ENCODE measurements at regions of chr5 and their contacts with region 1.

Region 1: GRCh38 chr5:96868603-96869371 is 7.5 kb upstream of the ERAP2 start:
- DNase-seq: peak in 1 of 2 donors; percentile 5
- H3K4me3 ChIP-seq: no peak overlapping the region
- H3K27ac ChIP-seq: no peak overlapping the region
- H3K4me1 ChIP-seq: no peaks in the 10 kb centered on the region
- H3K27me3 ChIP-seq: no peaks in the 10 kb centered on the region
- CTCF ChIP-seq: peak; percentile 82 to 97 (median 90)
- POLR2A ChIP-seq: no peak

Region 2: DNA sequence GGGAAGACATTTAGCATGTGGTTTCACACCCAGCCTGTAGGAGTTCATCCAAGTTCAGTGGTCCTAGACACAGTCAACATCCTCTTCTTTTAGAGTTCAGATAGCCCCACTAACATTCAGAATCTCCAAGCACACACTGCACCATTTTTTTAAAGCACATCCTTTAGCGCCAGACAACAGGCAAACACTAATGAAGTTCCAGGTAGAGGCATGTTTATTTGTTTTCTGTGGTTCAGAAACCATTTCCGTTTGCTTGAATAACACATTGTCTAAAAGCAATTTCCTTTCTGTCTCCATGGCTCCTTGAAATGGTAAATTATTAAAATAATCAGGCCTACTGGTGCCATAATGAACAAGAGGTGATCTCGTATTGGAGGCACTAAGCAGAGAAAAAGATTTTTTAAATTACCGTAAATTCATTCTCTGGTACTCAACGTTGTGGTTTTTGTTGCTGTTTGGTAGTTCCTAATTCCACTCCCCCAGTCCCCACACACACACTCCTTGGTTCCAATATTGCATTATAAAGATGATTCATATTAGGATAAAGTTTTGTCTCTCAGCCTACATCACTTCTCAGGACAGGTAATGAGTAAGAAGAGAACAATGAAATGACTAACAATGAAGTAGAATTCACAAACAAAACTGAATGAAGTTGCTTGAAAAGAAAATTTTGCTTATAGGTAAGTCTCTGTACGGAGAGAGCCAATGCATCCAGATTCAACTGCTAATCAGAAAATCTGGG is 588.8 kb before region 1 on chr5:
- intact Hi-C with region 1: no loop called
- DNase-seq: no peak
- H3K4me3 ChIP-seq: no peak overlapping the region
- H3K27ac ChIP-seq: no peak overlapping the region
- H3K4me1 ChIP-seq: no peaks in the 10 kb centered on the region
- H3K27me3 ChIP-seq: no peaks in the 10 kb centered on the region
- CTCF ChIP-seq: no peak
- POLR2A ChIP-seq: no peak

Region 3: GRCh38 chr5:96353220-96353619 is 515.6 kb before region 1 on chr5:
- intact Hi-C with region 1: no loop called
- DNase-seq: no peak
- H3K4me3 ChIP-seq: no peak overlapping the region
- H3K27ac ChIP-seq: no peak overlapping the region
- H3K4me1 ChIP-seq: no peaks in the 10 kb centered on the region
- H3K27me3 ChIP-seq: no peaks in the 10 kb centered on the region
- CTCF ChIP-seq: no peak
- POLR2A ChIP-seq: no peak

Region 4: GRCh38 chr5:96743065-96743768 is 125.6 kb before region 1 on chr5:
- intact Hi-C with region 1: no loop called
- DNase-seq: no peak
- H3K4me3 ChIP-seq: no peak overlapping the region
- H3K27ac ChIP-seq: peak overlapping the region in 2 of 3 donors; percentile 29 to 35
- H3K4me1 ChIP-seq: peaks cover 0 to 4% of the 10 kb centered on the region in 2 donors
- H3K27me3 ChIP-seq: no peaks in the 10 kb centered on the region
- CTCF ChIP-seq: no peak
- POLR2A ChIP-seq: no peak

Region 5: GRCh38 chr5:96816411-96816939 is 52.3 kb before region 1 on chr5:
- intact Hi-C with region 1: loop called (anchors 10 kb)
- DNase-seq: no peak
- H3K4me3 ChIP-seq: no peak overlapping the region
- H3K27ac ChIP-seq: no peak overlapping the region
- H3K4me1 ChIP-seq: no peaks in the 10 kb centered on the region
- H3K27me3 ChIP-seq: no peaks in the 10 kb centered on the region
- CTCF ChIP-seq: no peak
- POLR2A ChIP-seq: no peak

Region 6: DNA sequence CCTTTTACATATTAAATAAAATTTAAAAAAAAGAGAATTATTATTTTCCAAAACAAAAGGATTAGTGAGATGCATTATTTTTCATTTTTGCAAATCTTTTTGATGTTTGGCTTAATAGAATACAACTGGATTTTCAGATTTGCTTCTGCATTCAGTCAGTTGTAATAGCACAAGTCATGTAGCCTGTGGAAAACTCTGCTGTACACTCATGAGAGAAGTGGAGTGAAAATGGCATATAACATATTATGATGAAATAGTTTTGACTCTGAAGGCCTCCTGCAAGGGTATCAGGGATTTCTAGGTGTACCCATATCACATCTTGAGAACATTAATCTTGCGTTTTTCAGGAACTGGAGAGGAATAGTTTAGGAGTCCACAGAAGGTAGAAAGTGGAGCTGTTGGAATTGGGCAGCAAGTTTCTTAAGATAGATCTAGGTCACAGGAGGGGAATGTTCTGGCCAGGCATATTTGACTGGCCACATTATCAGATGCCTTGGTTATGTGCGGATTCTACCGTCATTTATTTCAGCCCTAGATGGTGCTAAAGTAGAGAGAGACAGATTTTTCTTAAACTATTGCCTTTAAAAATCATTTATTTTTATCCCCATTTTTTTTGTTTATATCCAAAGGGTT is 83.4 kb after region 1 on chr5:
- intact Hi-C with region 1: no loop called
- DNase-seq: no peak
- H3K4me3 ChIP-seq: no peak overlapping the region
- H3K27ac ChIP-seq: no peak overlapping the region
- H3K4me1 ChIP-seq: no peaks in the 10 kb centered on the region
- H3K27me3 ChIP-seq: no peaks in the 10 kb centered on the region
- CTCF ChIP-seq: no peak
- POLR2A ChIP-seq: no peak